ENCODE measurements at regions of chr4 and their contacts with region 1.

Region 1: DNA sequence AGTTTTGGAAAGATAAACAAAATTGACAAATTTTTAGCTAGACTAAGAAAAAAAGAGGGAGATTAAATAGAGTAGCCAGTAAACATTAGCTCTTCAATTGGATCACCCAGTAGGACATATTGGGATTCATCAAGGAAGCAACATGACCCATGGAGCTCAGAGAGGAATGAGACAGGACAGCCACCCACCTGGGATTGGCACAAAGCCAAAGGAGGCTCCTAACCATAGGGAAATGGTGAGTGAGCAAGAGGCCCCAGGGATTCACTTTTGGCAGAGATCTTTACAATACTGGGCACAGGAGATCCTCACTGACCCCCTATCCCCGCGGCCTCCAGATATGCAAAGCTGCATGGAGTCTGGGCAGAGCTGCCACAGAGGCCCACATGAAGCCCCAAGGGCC is 34.8 kb upstream of the CXCL6 start:
- DNase-seq: no peak
- ATAC-seq: no peak
- H3K4me3 ChIP-seq: no peak overlapping the region
- H3K27ac ChIP-seq: no peak overlapping the region
- H3K4me1 ChIP-seq: no peaks in the 10 kb centered on the region
- H3K27me3 ChIP-seq: no peaks in the 10 kb centered on the region
- CTCF ChIP-seq: no peak

Region 2: DNA sequence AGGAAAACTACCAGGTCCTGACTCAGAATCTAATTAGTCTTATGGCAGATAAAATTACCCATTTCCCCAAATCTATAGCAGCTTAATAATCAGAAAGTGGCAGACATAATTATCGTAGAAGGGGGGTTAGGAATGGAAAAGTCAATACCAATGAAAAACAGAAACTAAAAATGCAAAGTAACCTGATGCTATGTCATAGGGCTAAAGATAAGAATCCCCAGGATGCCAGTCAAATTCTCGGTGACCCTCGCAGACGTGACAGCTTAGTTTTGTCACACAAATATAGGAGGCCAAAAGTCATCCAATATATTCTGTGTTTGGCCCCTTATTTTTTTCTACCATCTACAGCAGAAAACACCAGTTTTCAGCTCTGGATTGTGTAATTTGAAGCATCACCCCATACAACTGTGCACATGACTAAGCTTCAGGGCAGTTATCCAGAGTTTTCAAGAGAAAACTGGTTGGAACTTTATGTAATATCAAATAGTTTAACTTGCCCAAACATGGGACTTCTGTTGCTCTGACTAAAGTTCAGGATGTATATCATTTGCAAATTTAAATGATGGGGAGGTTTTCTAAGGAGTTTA is 212.3 kb before region 1 on chr4:
- CTCF ChIA-PET with region 1: no interaction called
- POLR2A ChIA-PET with region 1: no interaction called
- in situ Hi-C with region 1: no loop called
- intact Hi-C with region 1: no loop called
- DNase-seq: no peak
- ATAC-seq: no peak
- H3K4me3 ChIP-seq: no peak overlapping the region
- H3K27ac ChIP-seq: no peak overlapping the region
- H3K4me1 ChIP-seq: no peaks in the 10 kb centered on the region
- H3K27me3 ChIP-seq: no peaks in the 10 kb centered on the region
- CTCF ChIP-seq: no peak

Region 3: GRCh38 chr4:73853246-73853704 is 51.6 kb after region 1 on chr4 and contains the start of gene PF4V1:
- CTCF ChIA-PET with region 1: no interaction called
- POLR2A ChIA-PET with region 1: interaction called, 16 read pairs
- in situ Hi-C with region 1: no loop called
- intact Hi-C with region 1: no loop called
- DNase-seq: no peak
- ATAC-seq: peak; percentile 93
- H3K4me3 ChIP-seq: peak within 1 kb of the TSS; percentile 39 to 50
- H3K27ac ChIP-seq: no peak within 1 kb of the TSS; the same call in 1 of the 2 replicates
- H3K4me1 ChIP-seq: no peaks in the 10 kb centered on the region
- H3K27me3 ChIP-seq: no peaks in the 10 kb centered on the region
- CTCF ChIP-seq: peak; percentile 51
- total RNA-seq, gene PF4V1: 0.51 TPM

Region 4: GRCh38 chr4:74531963-74532794 is 730.5 kb after region 1 on chr4:
- CTCF ChIA-PET with region 1: no interaction called
- POLR2A ChIA-PET with region 1: no interaction called
- in situ Hi-C with region 1: no loop called
- intact Hi-C with region 1: no loop called
- DNase-seq: peak; percentile 75
- ATAC-seq: 0 out of 2 replicates have a peak, but pooled peaks have one; percentile 63
- H3K4me3 ChIP-seq: no peak overlapping the region
- H3K27ac ChIP-seq: peak overlapping the region; percentile 56; the same call in 1 of the 2 replicates
- H3K4me1 ChIP-seq: no peaks in the 10 kb centered on the region
- H3K27me3 ChIP-seq: no peaks in the 10 kb centered on the region
- CTCF ChIP-seq: peak; percentile 55